Heart right ventricle (tissue), 16 donors: ENCODE measurements at regions of chr9 and their contacts with region 1.

Region 1: GRCh38 chr9:121634329-121635261 is 16.8 kb upstream of the DAB2IP start:
- DNase-seq: no peak
- ATAC-seq: peak; percentile 61 to 80 (median 74)
- H3K4me3 ChIP-seq: no peak overlapping the region
- H3K27ac ChIP-seq: peak overlapping the region in 5 of 10 donors; percentile 15 to 70 (median 51)
- H3K4me1 ChIP-seq: peaks cover 17 to 69% (median 47%) of the 10 kb centered on the region in 9 donors
- H3K27me3 ChIP-seq: no peaks in the 10 kb centered on the region
- CTCF ChIP-seq: peak; percentile 43 to 75 (median 60)

Region 2: DNA sequence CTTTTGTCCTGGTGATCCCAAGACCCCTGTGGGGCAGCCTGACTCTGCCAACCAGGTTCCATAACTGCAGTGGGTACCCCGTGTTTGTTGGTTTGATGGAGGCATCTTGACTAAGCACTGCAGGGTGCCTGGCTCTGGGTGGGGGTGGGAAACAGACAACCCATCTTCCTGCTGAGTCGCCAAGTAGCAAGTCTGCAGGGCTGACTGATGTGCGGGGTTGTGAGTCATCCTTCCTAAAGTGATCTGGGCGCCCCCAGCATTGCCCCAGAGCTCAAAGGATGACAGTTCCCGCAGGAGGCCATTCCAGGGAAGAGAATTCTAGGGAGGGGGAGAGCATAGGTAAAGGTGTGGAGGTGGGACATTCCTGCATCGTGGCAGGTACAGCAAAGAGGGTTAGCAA is 40.4 kb after region 1 on chr9:
- intact Hi-C with region 1: loop called in 2 of 10 experiments (anchors 5 kb)
- DNase-seq: no peak
- ATAC-seq: no peak
- H3K4me3 ChIP-seq: no peak overlapping the region
- H3K27ac ChIP-seq: no peak overlapping the region
- H3K4me1 ChIP-seq: peaks cover 22 to 76% (median 58%) of the 10 kb centered on the region in 9 donors
- H3K27me3 ChIP-seq: no peaks in the 10 kb centered on the region
- CTCF ChIP-seq: no peak

Region 3: GRCh38 chr9:121744002-121744686 is 109.5 kb after region 1 on chr9:
- intact Hi-C with region 1: loop called in 1 of 10 experiments (anchors 5 kb)
- DNase-seq: peak; percentile 67 to 75
- ATAC-seq: peak; percentile 43 to 83 (median 73)
- H3K4me3 ChIP-seq: peak overlapping the region; percentile 23 to 64 (median 52)
- H3K27ac ChIP-seq: peak overlapping the region; percentile 89 to 98 (median 94)
- H3K4me1 ChIP-seq: peaks cover 57 to 100% (median 90%) of the 10 kb centered on the region in 9 donors
- H3K27me3 ChIP-seq: no peaks in the 10 kb centered on the region
- CTCF ChIP-seq: peak; percentile 29 to 77 (median 54)

Region 4: DNA sequence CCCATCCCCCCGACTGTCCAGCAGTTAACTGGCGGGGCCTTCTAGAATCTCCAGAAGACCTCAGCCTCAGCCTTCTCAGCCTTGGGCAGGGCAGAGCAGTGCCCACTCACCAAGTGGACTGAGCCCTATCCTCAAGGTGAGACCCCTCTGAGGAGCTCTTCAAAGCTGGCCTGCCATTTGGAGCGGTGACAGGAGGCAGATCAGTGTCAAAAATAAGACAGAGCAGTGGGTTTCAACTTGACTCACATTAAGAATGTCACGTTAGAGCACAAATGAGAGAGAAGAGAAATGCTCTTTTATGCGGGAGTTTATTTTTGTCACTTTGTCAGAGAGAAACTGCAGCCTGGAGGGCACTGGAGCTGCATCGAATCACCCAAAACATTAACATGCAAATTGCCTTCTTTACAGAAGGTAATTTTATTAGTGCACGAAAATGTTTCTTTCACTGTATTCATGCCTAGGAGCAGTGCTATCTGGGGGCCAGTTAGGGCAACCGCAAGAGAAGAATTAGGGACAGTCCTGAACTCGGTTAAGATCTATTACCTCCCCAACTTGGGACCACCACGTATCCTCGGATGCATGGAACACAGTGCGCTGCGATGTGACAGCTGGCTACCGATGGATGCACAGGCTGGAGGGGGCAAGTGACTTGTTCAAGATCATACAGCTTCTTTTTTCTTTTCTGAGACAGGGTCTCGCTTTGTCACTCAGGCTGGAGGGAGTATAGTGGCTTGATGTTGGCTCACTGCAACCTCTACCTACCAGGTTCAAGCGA is 205.3 kb after region 1 on chr9:
- intact Hi-C with region 1: no loop called
- DNase-seq: no peak
- ATAC-seq: no peak
- H3K4me3 ChIP-seq: no peak overlapping the region
- H3K27ac ChIP-seq: no peak overlapping the region
- H3K4me1 ChIP-seq: peaks cover 0 to 21% (median 5%) of the 10 kb centered on the region in 9 donors
- H3K27me3 ChIP-seq: no peaks in the 10 kb centered on the region
- CTCF ChIP-seq: no peak

Region 5: GRCh38 chr9:121861501-121862180 is 227.0 kb after region 1 on chr9:
- intact Hi-C with region 1: loop called in 1 of 10 experiments (anchors 10 kb)
- DNase-seq: peak; percentile 49 to 50
- ATAC-seq: peak in 7 of 8 donors; percentile 77 to 93 (median 79)
- H3K4me3 ChIP-seq: no peak overlapping the region
- H3K27ac ChIP-seq: no peak overlapping the region
- H3K4me1 ChIP-seq: peaks cover 0 to 20% (median 13%) of the 10 kb centered on the region in 9 donors
- H3K27me3 ChIP-seq: no peaks in the 10 kb centered on the region
- CTCF ChIP-seq: peak; percentile 27 to 74 (median 64)